CD4-positive, alpha-beta memory T cell (primary cell): ENCODE measurements at regions of chr17 and their contacts with region 1.

Region 1: DNA sequence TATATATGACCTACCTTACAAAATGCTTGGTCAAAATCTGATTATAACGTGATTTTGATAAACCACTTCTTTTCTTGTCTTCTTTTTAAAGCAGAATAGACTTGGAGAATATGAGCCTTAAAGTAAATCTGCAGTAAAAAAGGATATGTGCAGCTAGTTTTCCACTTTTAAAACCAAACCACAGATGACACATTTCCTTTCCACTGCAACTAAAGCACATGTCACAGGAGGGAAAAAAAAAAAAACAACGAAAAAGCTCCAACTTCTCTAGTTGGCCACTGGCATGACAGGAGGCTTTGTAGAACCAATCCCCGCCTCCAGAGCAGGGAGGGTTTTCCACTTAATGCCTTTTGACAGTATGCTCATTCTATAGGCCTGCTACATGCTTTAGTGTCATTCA is at the start of gene EVI2A:
- DNase-seq: peak; percentile 83 to 96 (median 88)
- H3K4me3 ChIP-seq: peak within 1 kb of the TSS; percentile 87 to 92
- H3K4me3 Mint-ChIP-seq: peak within 1 kb of the TSS; percentile 80 to 95 (median 90)
- H3K27ac ChIP-seq: peak within 1 kb of the TSS; percentile 73
- H3K27ac Mint-ChIP-seq: peak within 1 kb of the TSS; percentile 91 to 98 (median 95)
- H3K4me1 ChIP-seq: peaks cover 24% of the 10 kb centered on the region
- H3K4me1 Mint-ChIP-seq: peaks cover 19 to 45% (median 26%) of the 10 kb centered on the region in 4 donors
- H3K27me3 ChIP-seq: no peaks in the 10 kb centered on the region
- H3K27me3 Mint-ChIP-seq: no peaks in the 10 kb centered on the region
- total RNA-seq, gene EVI2A: 133 to 139 TPM

Region 2: DNA sequence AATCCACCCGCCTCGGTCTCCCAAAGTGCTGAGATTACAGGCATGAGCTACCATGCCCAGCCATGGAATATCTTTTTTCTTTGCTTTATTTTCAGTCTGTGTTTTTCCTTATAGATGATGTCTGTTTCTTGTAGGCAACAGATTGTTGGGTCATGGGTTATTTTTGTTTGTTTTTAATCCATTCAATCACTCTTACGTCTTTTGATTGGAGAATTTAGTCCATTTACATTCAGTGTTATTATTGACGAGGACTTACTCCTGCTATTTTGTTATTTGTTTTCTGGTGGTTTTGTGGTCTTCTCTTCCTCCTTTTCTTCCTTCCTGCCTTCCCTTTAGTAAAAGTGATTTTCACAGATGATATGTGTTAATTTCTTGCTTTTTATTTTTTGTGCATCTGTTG is 80.4 kb before region 1 on chr17:
- CTCF ChIA-PET with region 1: no interaction called
- POLR2A ChIA-PET with region 1: no interaction called
- intact Hi-C with region 1: no loop called
- DNase-seq: no peak
- H3K4me3 ChIP-seq: no peak overlapping the region
- H3K4me3 Mint-ChIP-seq: no peak overlapping the region
- H3K27ac ChIP-seq: no peak overlapping the region
- H3K27ac Mint-ChIP-seq: peak overlapping the region in 1 of 7 donors; percentile 35
- H3K4me1 ChIP-seq: no peaks in the 10 kb centered on the region
- H3K4me1 Mint-ChIP-seq: peaks cover 5 to 16% (median 6%) of the 10 kb centered on the region in 4 donors
- H3K27me3 ChIP-seq: no peaks in the 10 kb centered on the region
- H3K27me3 Mint-ChIP-seq: no peaks in the 10 kb centered on the region

Region 3: GRCh38 chr17:31251105-31251969 is 70.1 kb before region 1 on chr17:
- CTCF ChIA-PET with region 1: no interaction called
- POLR2A ChIA-PET with region 1: no interaction called
- intact Hi-C with region 1: no loop called
- DNase-seq: no peak
- H3K4me3 ChIP-seq: no peak overlapping the region
- H3K4me3 Mint-ChIP-seq: no peak overlapping the region
- H3K27ac ChIP-seq: no peak overlapping the region
- H3K27ac Mint-ChIP-seq: no peak overlapping the region
- H3K4me1 ChIP-seq: no peaks in the 10 kb centered on the region
- H3K4me1 Mint-ChIP-seq: no peaks in the 10 kb centered on the region
- H3K27me3 ChIP-seq: no peaks in the 10 kb centered on the region
- H3K27me3 Mint-ChIP-seq: no peaks in the 10 kb centered on the region

Region 4: DNA sequence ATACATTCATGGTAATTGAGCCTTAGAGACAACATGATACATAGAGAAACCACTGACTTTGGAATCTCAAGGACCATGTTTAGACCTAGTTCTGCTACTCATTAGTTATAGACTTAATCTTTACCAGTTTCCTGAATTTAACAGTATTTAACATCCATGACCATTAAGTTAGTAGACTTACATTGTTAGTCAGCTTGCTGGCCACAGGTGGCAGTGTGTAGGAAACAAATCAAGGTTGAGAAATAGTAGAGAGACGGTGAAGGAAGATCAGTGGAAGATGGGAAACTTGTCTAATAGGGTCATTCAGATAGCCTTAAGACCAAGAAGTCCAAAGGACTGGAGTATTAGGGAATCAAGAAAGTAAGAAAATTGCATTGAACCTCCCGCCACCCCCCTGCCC is 55.4 kb before region 1 on chr17:
- CTCF ChIA-PET with region 1: interaction called, 6 read pairs
- POLR2A ChIA-PET with region 1: no interaction called
- intact Hi-C with region 1: loop called (anchors 2 kb)
- DNase-seq: peak in 4 of 5 donors; percentile 3 to 19 (median 12)
- H3K4me3 ChIP-seq: no peak overlapping the region
- H3K4me3 Mint-ChIP-seq: no peak overlapping the region
- H3K27ac ChIP-seq: no peak overlapping the region
- H3K27ac Mint-ChIP-seq: peak overlapping the region in 1 of 7 donors; percentile 26
- H3K4me1 ChIP-seq: no peaks in the 10 kb centered on the region
- H3K4me1 Mint-ChIP-seq: peaks cover 0 to 3% (median under 1%) of the 10 kb centered on the region in 4 donors
- H3K27me3 ChIP-seq: no peaks in the 10 kb centered on the region
- H3K27me3 Mint-ChIP-seq: no peaks in the 10 kb centered on the region

Region 5: GRCh38 chr17:31286587-31286986 is 34.9 kb before region 1 on chr17:
- CTCF ChIA-PET with region 1: interaction called, 3 read pairs
- POLR2A ChIA-PET with region 1: no interaction called
- intact Hi-C with region 1: loop called (anchors 5 kb)
- DNase-seq: no peak
- H3K4me3 ChIP-seq: no peak overlapping the region
- H3K4me3 Mint-ChIP-seq: no peak overlapping the region
- H3K27ac ChIP-seq: no peak overlapping the region
- H3K27ac Mint-ChIP-seq: no peak overlapping the region
- H3K4me1 ChIP-seq: no peaks in the 10 kb centered on the region
- H3K4me1 Mint-ChIP-seq: peaks cover 3 to 18% (median 6%) of the 10 kb centered on the region in 4 donors
- H3K27me3 ChIP-seq: no peaks in the 10 kb centered on the region
- H3K27me3 Mint-ChIP-seq: no peaks in the 10 kb centered on the region

Region 6: DNA sequence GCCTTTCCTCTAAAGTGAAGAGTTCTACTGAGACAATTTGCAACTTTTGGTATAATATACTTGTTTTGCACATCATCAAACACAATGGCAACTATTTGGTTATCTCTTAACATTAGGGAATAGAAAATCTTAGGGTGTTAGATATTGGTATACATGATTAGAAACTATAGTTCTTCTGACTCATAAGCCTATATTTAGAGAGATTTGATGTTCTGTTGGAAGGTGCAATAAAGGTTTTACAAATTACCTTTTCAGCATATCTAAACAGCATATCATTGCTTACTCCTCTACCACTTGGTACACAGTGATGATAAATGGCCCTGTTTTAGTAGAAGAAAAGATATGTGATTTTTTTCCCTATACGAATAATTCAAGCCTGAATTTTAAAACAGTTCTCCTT is 13.8 kb before region 1 on chr17:
- CTCF ChIA-PET with region 1: interaction called, 9 read pairs
- POLR2A ChIA-PET with region 1: interaction called, 197 read pairs
- intact Hi-C with region 1: loop called (anchors 1 kb)
- DNase-seq: no peak
- H3K4me3 ChIP-seq: peak overlapping the region in 1 of 2 donors; percentile 29
- H3K4me3 Mint-ChIP-seq: peak overlapping the region; percentile 40 to 96 (median 90)
- H3K27ac ChIP-seq: peak overlapping the region; percentile 70
- H3K27ac Mint-ChIP-seq: peak overlapping the region; percentile 71 to 98 (median 95)
- H3K4me1 ChIP-seq: peaks cover 61% of the 10 kb centered on the region
- H3K4me1 Mint-ChIP-seq: peaks cover 42 to 77% (median 62%) of the 10 kb centered on the region in 4 donors
- H3K27me3 ChIP-seq: no peaks in the 10 kb centered on the region
- H3K27me3 Mint-ChIP-seq: no peaks in the 10 kb centered on the region

Region 7: DNA sequence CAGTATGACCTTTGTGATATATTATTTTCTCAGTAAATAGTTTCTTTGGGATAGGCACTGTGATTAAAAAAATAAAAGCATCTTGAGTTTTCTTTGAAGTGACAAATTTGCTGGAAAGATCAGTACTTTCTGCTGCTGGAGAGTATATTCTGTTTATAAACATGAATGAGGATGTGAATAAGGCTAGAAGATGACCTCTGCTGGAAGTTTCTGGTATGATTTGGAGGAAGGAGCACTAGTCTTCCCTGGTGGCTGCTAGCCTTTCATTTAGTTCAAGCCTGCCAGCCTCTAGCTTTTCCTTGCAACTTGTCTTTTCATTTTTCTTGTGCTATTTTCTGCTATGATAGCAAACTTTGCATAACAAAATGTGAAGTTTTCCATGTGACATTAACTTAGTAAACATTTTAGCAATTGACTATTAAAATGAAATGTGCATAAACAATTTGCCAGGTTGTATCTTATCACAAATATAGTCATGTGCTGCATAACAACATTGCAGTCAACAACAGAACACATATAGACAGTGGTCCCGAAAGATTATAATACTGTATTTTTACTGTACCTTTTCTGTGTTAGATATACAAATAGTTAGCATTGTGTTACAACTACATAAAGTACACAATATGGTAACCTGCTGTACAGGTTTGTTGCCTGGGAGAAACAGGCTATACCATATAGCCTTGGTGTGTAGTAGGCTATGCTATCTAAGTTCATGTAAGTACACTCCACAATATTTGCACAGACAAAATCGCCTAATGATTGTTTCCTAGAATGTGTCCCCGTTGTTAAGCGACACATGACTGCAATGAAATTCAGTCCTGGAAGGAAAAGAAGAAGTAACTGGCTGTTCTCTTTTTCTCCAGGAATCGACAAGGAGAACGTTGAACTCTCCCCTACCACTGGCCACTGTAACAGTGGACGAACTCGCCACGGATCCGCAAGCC is 51.9 kb after region 1 on chr17:
- CTCF ChIA-PET with region 1: interaction called, 6 read pairs
- POLR2A ChIA-PET with region 1: interaction called, 10 read pairs
- intact Hi-C with region 1: loop called (anchors 1 kb)
- DNase-seq: peak in 4 of 5 donors; percentile 60 to 67 (median 63)
- H3K4me3 ChIP-seq: no peak overlapping the region
- H3K4me3 Mint-ChIP-seq: peak overlapping the region in 1 of 8 donors; percentile 1
- H3K27ac ChIP-seq: no peak overlapping the region
- H3K27ac Mint-ChIP-seq: peak overlapping the region in 1 of 7 donors; percentile 29
- H3K4me1 ChIP-seq: peaks cover 9% of the 10 kb centered on the region
- H3K4me1 Mint-ChIP-seq: peaks cover 11 to 27% (median 20%) of the 10 kb centered on the region in 4 donors
- H3K27me3 ChIP-seq: no peaks in the 10 kb centered on the region
- H3K27me3 Mint-ChIP-seq: no peaks in the 10 kb centered on the region

Region 8: DNA sequence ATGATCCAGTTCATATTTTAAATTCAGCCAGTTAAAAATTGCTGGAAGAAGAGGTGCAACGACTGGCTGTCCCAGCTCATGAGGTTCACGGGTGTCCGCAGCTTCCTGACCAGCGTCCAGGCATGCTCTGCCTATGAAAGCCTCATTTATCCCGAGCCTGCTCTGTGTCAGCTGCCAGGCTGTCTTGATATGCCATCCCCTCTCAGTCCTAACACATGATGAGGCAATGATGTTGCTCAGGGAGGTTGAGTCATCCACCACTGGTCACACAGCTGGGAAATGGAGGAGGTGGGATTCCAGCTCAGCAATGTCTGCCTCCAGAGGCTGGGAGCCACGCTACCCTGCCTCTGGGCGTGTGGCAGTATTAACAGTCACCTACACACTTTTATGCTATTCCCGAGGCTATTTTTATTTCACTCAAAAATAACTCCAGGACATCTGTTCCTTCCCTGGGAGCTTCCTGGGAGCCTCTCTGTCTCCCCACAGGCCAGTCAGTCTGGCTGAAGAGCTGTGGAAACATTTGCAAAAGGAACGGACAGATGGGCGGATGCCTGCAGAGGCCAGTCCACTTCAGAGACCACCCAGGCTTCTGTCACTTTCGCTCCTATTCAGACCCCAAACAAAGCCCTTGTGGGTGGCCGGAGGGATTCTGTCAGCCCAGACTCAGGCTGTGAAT is 92.5 kb after region 1 on chr17:
- CTCF ChIA-PET with region 1: no interaction called
- POLR2A ChIA-PET with region 1: no interaction called
- intact Hi-C with region 1: no loop called
- DNase-seq: no peak
- H3K4me3 ChIP-seq: no peak overlapping the region
- H3K4me3 Mint-ChIP-seq: no peak overlapping the region
- H3K27ac ChIP-seq: no peak overlapping the region
- H3K27ac Mint-ChIP-seq: no peak overlapping the region
- H3K4me1 ChIP-seq: no peaks in the 10 kb centered on the region
- H3K4me1 Mint-ChIP-seq: no peaks in the 10 kb centered on the region
- H3K27me3 ChIP-seq: no peaks in the 10 kb centered on the region
- H3K27me3 Mint-ChIP-seq: no peaks in the 10 kb centered on the region